PC-9 (cell line): ENCODE measurements at regions of chr5 and their contacts with region 1.

Region 1: DNA sequence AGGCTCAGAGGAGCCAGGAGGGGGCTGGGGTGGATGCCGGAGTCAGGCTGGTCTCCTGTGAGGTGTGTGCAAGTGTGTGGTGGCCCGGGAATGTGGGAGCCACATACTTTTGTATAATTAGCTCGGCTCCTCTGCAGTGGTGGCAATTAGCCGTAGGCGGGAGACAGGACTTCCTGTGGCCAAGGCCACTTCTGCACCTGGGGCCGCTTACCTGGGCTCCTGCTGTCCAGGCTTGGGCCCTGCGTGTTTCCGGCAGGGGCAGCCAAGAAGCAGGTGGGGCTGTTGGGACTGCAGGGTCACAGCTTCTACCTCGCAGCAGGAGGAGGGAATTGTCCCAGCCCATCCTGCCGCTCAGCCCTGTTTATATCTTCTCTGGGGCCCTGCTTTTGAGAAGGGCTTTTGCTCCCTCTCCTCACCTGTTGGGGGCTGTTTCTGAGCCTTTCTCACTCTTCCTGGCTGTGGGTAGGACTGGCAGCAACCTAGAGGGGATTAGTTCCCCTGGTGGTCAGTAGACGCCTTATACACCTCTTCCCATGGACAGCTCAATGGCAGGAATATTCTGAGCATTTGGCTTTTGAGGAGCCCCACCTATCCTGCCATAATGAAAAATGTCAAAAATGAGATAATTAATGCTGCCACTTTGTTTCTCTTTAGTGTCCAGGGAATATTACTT is 145.4 kb upstream of the PITX1 start:
- DNase-seq: peak in 1 of 2 experiments; percentile 74
- H3K4me3 ChIP-seq: no peak overlapping the region
- H3K27ac ChIP-seq: peak overlapping the region; percentile 19; the same call in 1 of the 2 replicates
- H3K4me1 ChIP-seq: peaks cover 9% of the 10 kb centered on the region; the same call in 1 of the 2 replicates
- H3K27me3 ChIP-seq: no peaks in the 10 kb centered on the region
- CTCF ChIP-seq: no peak

Region 2: GRCh38 chr5:135026645-135027265 is 152.7 kb before region 1 on chr5:
- CTCF ChIA-PET with region 1: interaction called, 15 read pairs
- POLR2A ChIA-PET with region 1: no interaction called
- intact Hi-C with region 1: no loop called
- DNase-seq: no peak
- H3K4me3 ChIP-seq: no peak overlapping the region
- H3K27ac ChIP-seq: no peak overlapping the region
- H3K4me1 ChIP-seq: peaks cover 15% of the 10 kb centered on the region
- H3K27me3 ChIP-seq: no peaks in the 10 kb centered on the region
- CTCF ChIP-seq: no peak